Activated CD4-positive, alpha-beta T cell treated with anti-CD3 and anti-CD28 coated beads for 36 hours (primary cell): ENCODE measurements at regions of chr5 and their contacts with region 1.

Region 1: DNA sequence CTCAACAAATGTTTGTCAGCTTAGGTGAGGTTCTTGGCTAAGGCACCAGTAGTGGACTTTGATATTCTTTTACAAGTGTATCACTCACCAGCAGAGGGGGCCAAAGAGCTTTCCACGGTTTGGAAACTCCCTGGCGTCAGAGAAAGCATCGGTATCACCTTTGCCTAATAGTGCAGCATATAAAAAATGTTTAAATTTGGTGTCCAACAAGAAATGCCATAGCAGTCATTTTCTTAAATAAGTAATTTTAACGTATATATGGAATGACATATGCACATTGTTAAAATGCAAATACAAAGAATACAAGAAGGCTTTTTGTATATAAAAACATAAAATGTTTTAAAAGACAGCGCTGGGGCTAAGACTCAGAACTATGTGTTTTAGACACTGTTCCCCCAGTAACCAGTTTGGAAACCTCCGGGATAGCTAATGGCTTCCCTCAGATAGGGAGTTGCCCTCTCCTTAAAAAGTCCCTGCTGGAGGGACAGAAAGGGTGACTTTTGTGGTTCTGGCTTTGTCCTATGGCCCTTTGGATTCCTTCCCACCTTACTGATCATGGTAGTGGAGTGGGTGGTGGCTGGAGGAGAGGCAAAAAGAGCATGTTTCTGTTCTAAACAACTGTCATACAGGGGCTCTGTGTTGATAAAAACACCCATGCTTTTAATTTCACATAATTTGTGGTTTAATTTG is 124.6 kb downstream of the GPBP1 start:
- DNase-seq: peak; percentile 91
- ATAC-seq: peak; percentile 36
- H3K4me3 Mint-ChIP-seq: peak overlapping the region; percentile 56
- H3K27ac Mint-ChIP-seq: peak overlapping the region; percentile 62
- H3K4me1 Mint-ChIP-seq: peaks cover 40% of the 10 kb centered on the region
- H3K27me3 Mint-ChIP-seq: peaks cover 2% of the 10 kb centered on the region

Region 2: GRCh38 chr5:57383093-57383861 is 84.8 kb after region 1 on chr5:
- CTCF ChIA-PET with region 1: interaction called, 7 read pairs
- POLR2A ChIA-PET with region 1: no interaction called
- intact Hi-C with region 1: loop called (anchors 1 to 2 kb)
- DNase-seq: peak; percentile 72
- ATAC-seq: peak; percentile 97
- H3K4me3 Mint-ChIP-seq: no peak overlapping the region
- H3K27ac Mint-ChIP-seq: peak overlapping the region; percentile 4
- H3K4me1 Mint-ChIP-seq: peaks cover 17% of the 10 kb centered on the region
- H3K27me3 Mint-ChIP-seq: peaks cover 1% of the 10 kb centered on the region

Region 3: DNA sequence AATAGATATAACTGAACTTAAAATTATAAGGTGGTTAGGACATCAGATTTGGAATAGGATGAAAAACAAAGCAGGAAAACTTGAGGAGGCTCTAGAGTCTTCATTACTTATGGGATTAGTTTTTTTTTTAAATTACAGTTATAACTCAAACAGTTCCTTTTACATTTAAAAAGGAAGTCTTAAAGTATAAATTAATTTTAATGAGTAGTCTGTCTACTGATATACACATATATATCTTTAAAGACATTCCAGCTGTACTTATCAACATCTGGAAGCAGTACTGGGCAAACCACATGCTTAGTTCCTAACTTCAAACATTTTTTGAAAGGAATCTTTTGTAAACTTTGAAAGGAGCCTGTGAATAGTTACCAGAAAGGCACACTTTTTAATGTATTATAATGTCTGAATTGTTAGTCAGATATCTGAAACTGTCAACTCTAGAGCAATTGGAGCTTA is 178.2 kb after region 1 on chr5:
- CTCF ChIA-PET with region 1: no interaction called
- POLR2A ChIA-PET with region 1: no interaction called
- intact Hi-C with region 1: no loop called
- DNase-seq: no peak
- ATAC-seq: no peak
- H3K4me3 Mint-ChIP-seq: no peak overlapping the region
- H3K27ac Mint-ChIP-seq: no peak overlapping the region
- H3K4me1 Mint-ChIP-seq: no peaks in the 10 kb centered on the region
- H3K27me3 Mint-ChIP-seq: peaks cover 5% of the 10 kb centered on the region

Region 4: GRCh38 chr5:57499262-57500050 is 201.0 kb after region 1 on chr5:
- CTCF ChIA-PET with region 1: interaction called, 6 read pairs
- POLR2A ChIA-PET with region 1: no interaction called
- intact Hi-C with region 1: loop called (anchors 1 kb)
- DNase-seq: peak; percentile 28
- ATAC-seq: peak; percentile 67
- H3K4me3 Mint-ChIP-seq: peak overlapping the region; percentile 33
- H3K27ac Mint-ChIP-seq: no peak overlapping the region
- H3K4me1 Mint-ChIP-seq: peaks cover 27% of the 10 kb centered on the region
- H3K27me3 Mint-ChIP-seq: peaks cover 2% of the 10 kb centered on the region

Region 5: DNA sequence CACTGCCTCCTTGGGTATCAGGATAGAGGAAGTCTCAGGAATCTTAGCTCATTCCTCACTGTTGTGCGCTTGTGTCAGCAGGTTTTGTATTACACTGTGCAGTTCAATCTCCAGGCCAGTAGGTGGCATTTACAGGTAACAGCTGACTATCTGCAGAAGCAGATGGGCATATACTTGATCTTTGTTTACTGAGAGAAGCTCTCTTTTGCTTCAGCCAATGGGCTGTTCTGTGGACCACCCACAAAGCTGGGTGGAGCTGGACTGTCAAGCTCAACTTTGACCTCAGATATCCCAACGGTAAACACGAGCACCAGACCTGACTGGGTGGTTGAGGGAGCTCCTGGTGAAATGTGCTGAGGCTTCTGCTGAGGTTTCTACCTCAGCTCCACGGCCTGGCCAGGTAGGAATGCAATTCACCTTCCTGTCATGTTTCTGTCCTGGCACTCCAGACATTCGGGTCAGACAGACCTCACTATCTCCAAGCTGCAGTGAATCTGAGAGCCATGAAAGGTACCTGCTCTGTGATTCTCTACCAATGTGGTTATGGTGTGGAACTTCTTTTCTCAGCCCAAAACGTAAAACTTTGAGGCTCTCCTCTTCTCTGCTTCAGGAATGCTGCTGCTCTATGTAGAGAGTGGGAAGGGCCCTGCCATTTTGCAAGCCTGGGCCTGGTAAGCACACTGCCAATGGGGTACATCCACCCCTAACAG is 352.1 kb after region 1 on chr5:
- CTCF ChIA-PET with region 1: interaction called, 3 read pairs
- POLR2A ChIA-PET with region 1: no interaction called
- intact Hi-C with region 1: loop called in 1 of 2 experiments (anchors 1 kb)
- DNase-seq: peak; percentile 30
- ATAC-seq: no peak
- H3K4me3 Mint-ChIP-seq: no peak overlapping the region
- H3K27ac Mint-ChIP-seq: no peak overlapping the region
- H3K4me1 Mint-ChIP-seq: no peaks in the 10 kb centered on the region
- H3K27me3 Mint-ChIP-seq: peaks cover 8% of the 10 kb centered on the region

Region 6: GRCh38 chr5:57779383-57780223 is 481.2 kb after region 1 on chr5:
- CTCF ChIA-PET with region 1: interaction called, 5 read pairs
- POLR2A ChIA-PET with region 1: no interaction called
- intact Hi-C with region 1: loop called (anchors 2 to 5 kb)
- DNase-seq: peak; percentile 28
- ATAC-seq: no peak
- H3K4me3 Mint-ChIP-seq: no peak overlapping the region
- H3K27ac Mint-ChIP-seq: no peak overlapping the region
- H3K4me1 Mint-ChIP-seq: no peaks in the 10 kb centered on the region
- H3K27me3 Mint-ChIP-seq: peaks cover 4% of the 10 kb centered on the region